Adrenal gland (tissue), 19 donors: ENCODE measurements at regions of chr9 and their contacts with region 1.

Region 1: DNA sequence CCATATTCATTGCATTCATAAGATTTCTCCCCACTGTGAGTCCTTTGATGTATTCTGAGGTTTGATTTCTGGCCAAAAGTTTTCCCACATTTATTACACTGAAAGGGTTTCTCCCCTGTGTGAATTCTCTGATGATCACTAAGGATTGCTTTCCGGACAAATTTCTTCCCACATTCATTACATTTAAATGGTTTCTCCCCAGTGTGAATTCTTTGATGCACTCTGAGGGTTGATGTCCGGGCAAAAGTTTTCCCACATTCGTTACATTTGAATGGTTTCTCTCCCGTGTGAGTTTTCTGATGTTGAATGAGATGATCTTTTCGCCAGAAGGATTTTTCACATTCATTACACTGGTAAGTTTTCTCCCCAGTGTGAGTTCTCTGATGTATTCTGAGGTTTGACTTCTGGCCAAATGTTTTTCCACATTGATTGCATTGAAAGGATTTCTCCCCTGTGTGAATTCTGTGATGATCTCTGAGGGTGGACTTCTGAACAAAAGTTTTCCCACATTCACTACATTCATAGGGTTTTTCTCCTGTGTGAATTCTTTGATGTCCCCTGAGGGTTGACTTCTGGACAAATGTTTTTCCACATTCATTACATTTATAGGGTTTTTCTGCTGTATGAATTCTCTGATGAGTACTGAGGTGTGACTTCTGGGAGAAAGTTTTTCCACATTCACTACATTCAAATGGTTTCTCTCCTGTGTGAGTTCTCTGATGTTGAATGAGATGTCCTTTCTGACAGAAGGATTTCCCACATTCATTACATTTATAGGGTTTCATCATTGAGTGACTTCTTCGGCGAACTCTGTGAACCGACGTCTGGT is 18.8 kb downstream of the ZNF510 start:
- DNase-seq: no peak
- H3K4me3 ChIP-seq: peak overlapping the region in 1 of 4 donors; percentile 33
- H3K27ac ChIP-seq: no peak overlapping the region
- H3K4me1 ChIP-seq: no peaks in the 10 kb centered on the region
- H3K27me3 ChIP-seq: no peaks in the 10 kb centered on the region
- CTCF ChIP-seq: no peak
- POLR2A ChIP-seq: no peak

Region 2: GRCh38 chr9:96464426-96464825 is 294.6 kb before region 1 on chr9:
- intact Hi-C with region 1: no loop called
- DNase-seq: no peak
- H3K4me3 ChIP-seq: no peak overlapping the region
- H3K27ac ChIP-seq: no peak overlapping the region
- H3K4me1 ChIP-seq: no peaks in the 10 kb centered on the region
- H3K27me3 ChIP-seq: no peaks in the 10 kb centered on the region
- CTCF ChIP-seq: no peak
- POLR2A ChIP-seq: no peak

Region 3: GRCh38 chr9:96818535-96818934 is 59.5 kb after region 1 on chr9:
- intact Hi-C with region 1: loop called in 1 of 2 experiments (anchors 10 kb)
- DNase-seq: no peak
- H3K4me3 ChIP-seq: peak overlapping the region in 1 of 4 donors; percentile 4
- H3K27ac ChIP-seq: no peak overlapping the region
- H3K4me1 ChIP-seq: no peaks in the 10 kb centered on the region
- H3K27me3 ChIP-seq: no peaks in the 10 kb centered on the region
- CTCF ChIP-seq: no peak
- POLR2A ChIP-seq: no peak